ENCODE measurements at regions of chr19 and their contacts with region 1.

Region 1: GRCh38 chr19:47863514-47863936 is 4.5 kb downstream of the TPRX2 start:
- DNase-seq: no peak
- H3K4me3 ChIP-seq: no peak overlapping the region
- CTCF ChIP-seq: peak; percentile 95

Region 2: GRCh38 chr19:47644762-47645482 is 218.6 kb before region 1 on chr19:
- CTCF ChIA-PET with region 1: no interaction called
- POLR2A ChIA-PET with region 1: no interaction called
- DNase-seq: no peak
- H3K4me3 ChIP-seq: no peak overlapping the region
- CTCF ChIP-seq: no peak

Region 3: DNA sequence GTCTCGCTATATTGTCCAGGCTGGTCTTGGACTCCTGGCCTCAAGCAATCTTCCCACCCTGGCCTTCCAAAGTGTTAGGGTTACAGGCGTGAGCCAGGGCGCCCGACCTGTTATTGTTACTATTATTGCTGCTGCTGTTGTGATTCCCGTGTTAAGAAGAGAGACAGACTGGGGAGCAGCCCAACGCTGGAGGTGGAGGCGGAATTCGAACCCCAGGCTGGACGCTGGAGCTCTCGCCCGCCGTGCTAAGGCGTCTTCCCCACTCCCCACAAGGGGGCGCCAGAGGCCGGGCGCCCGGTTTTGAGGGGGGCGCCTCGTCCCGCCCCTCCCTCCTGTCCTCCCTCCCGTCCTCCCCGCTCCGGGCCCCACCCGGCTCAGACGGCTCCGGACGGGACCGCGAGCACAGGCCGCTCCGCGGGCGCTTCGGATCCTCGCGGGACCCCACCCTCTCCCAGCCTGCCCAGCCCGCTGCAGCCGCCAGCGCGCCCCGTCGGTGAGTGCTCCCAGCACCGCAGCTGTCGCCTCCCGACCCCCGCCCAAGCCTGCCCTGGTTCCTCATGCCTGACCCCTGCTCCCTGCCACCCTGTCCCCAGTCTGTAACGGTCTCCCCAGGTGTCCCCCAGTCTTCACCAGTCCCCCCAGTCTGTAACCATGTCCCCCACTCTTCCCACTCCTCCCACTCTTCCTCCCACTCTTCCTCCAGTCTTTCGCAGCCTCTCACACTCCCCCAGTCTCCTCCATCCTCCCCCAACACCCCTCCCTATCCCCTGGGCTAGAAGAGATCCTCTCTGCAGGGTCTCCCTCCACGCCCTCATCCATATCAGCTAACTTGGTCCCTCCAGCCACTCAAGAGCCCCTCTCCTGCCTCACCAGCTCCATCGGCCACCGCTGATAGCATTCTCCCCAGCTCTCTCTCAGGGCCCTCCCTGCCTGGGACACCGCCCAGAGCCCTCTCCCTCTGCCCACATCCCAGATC is 150.2 kb before region 1 on chr19 and contains the start of gene EHD2:
- CTCF ChIA-PET with region 1: interaction called, 19 read pairs
- POLR2A ChIA-PET with region 1: no interaction called
- DNase-seq: no peak
- H3K4me3 ChIP-seq: peak within 1 kb of the TSS; percentile 95
- CTCF ChIP-seq: peak; percentile 90

Region 4: GRCh38 chr19:47790398-47790814 is 73.1 kb before region 1 on chr19:
- CTCF ChIA-PET with region 1: interaction called, 11 read pairs
- POLR2A ChIA-PET with region 1: no interaction called
- DNase-seq: no peak
- H3K4me3 ChIP-seq: no peak overlapping the region
- CTCF ChIP-seq: peak; percentile 92

Region 5: DNA sequence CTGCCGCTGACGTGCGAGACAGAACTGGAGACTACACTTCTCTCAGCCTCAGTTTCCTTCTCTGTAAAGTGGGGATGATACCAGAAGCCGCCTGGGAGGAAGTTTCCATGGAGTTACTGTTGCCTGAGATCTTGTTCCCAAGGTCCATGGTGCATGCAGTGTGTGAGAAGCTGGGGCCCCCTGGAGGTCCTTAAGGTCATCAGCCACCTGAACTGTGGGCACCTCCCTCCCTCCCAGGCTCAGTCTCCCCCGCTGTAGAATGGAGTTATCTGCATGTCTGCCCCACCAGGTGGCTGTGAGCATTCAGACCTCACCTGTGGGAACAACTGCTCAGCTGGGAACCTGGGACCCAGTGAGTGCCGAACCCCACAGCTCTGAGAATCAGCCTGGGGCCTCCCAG is 39.1 kb before region 1 on chr19:
- CTCF ChIA-PET with region 1: interaction called, 12 read pairs
- POLR2A ChIA-PET with region 1: no interaction called
- DNase-seq: no peak
- H3K4me3 ChIP-seq: no peak overlapping the region
- CTCF ChIP-seq: no peak

Region 6: GRCh38 chr19:47848823-47849473 is 14.6 kb before region 1 on chr19:
- CTCF ChIA-PET with region 1: interaction called, 43 read pairs
- POLR2A ChIA-PET with region 1: no interaction called
- DNase-seq: no peak
- H3K4me3 ChIP-seq: no peak overlapping the region
- CTCF ChIP-seq: peak; percentile 15

Measured in AG04449 (cell line).